K562 (cell line): ENCODE measurements at regions of chr16 and their contacts with region 1.

Region 1: GRCh38 chr16:83952940-83953795 is at the start of gene OSGIN1:
- DNase-seq: peak; percentile 96 to 98 (median 96)
- ATAC-seq: peak; percentile 91
- H3K4me3 ChIP-seq: peak within 1 kb of the TSS; percentile 64
- H3K27ac ChIP-seq: peak within 1 kb of the TSS; percentile 85
- H3K4me1 ChIP-seq: peaks cover 18 to 51% of the 10 kb centered on the region in 2 experiments
- H3K27me3 ChIP-seq: no peaks in the 10 kb centered on the region
- CTCF ChIP-seq: no peak
- EP300 ChIP-seq: peak; percentile 48
- POLR2A ChIP-seq: peak; percentile 93
- RAD21 ChIP-seq: no peak
- polyA plus RNA-seq, gene OSGIN1: 0.03 to 0.04 TPM

Region 2: GRCh38 chr16:83826146-83826913 is 126.8 kb before region 1 on chr16:
- CTCF ChIA-PET with region 1: no interaction called
- POLR2A ChIA-PET with region 1: no interaction called
- in situ Hi-C with region 1: no loop called
- intact Hi-C with region 1: loop called (anchors 5 kb)
- DNase-seq: peak; percentile 85 to 91 (median 89)
- ATAC-seq: peak; percentile 96
- H3K4me3 ChIP-seq: no peak overlapping the region
- H3K27ac ChIP-seq: no peak overlapping the region
- H3K4me1 ChIP-seq: peaks cover 0 to 7% of the 10 kb centered on the region in 2 experiments; a peak in 3 of 5 replicates
- H3K27me3 ChIP-seq: peaks cover 32 to 63% of the 10 kb centered on the region in 2 experiments
- CTCF ChIP-seq: peak; percentile 92 to 98 (median 95)
- EP300 ChIP-seq: no peak; the same call in 1 of the 2 replicates
- POLR2A ChIP-seq: no peak
- RAD21 ChIP-seq: peak; percentile 88 to 98

Region 3: DNA sequence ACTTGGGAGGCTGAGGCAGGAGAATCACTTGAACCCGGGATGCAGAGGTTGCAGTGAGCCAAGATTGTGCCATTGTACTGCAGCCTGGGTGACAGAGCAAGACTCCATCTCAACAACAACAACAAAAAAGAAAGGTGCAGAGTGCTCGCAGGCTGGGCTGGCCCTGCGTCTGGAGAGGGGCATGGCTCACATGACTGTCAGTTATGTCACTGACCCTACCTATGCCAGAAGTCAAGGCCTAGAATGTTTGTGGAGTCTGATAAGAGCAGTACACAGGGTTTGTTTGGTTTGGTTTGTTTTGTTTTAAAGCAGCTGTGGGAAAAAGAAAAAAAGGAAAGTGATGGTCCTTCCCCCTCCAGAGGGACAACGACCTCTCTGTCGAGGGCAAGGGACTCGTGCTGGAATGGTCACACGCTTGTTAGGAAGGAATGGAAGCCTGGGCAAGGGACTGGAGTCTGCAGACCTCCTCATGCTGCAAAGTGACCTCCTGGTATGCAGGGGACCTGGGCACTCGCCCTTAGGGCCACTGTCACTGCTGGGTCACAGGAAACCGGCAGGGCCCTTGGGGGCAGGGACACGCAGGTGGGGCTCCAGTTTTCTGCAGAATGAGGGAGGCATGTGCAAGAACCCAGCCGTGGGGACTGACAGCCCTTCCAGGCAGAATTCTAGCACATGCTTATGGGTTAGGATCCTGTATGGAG is 10.2 kb before region 1 on chr16:
- CTCF ChIA-PET with region 1: no interaction called
- POLR2A ChIA-PET with region 1: interaction called, 11 read pairs
- in situ Hi-C with region 1: no loop called
- intact Hi-C with region 1: no loop called
- DNase-seq: no peak
- ATAC-seq: no peak; the same call in 2 of the 3 replicates
- H3K4me3 ChIP-seq: no peak overlapping the region
- H3K27ac ChIP-seq: no peak overlapping the region
- H3K4me1 ChIP-seq: peaks cover 0 to 31% of the 10 kb centered on the region in 2 experiments; a peak in 2 of 5 replicates
- H3K27me3 ChIP-seq: peaks cover 22 to 33% of the 10 kb centered on the region in 2 experiments; a peak in 4 of 5 replicates
- CTCF ChIP-seq: no peak
- EP300 ChIP-seq: no peak
- POLR2A ChIP-seq: no peak
- RAD21 ChIP-seq: no peak

Region 4: DNA sequence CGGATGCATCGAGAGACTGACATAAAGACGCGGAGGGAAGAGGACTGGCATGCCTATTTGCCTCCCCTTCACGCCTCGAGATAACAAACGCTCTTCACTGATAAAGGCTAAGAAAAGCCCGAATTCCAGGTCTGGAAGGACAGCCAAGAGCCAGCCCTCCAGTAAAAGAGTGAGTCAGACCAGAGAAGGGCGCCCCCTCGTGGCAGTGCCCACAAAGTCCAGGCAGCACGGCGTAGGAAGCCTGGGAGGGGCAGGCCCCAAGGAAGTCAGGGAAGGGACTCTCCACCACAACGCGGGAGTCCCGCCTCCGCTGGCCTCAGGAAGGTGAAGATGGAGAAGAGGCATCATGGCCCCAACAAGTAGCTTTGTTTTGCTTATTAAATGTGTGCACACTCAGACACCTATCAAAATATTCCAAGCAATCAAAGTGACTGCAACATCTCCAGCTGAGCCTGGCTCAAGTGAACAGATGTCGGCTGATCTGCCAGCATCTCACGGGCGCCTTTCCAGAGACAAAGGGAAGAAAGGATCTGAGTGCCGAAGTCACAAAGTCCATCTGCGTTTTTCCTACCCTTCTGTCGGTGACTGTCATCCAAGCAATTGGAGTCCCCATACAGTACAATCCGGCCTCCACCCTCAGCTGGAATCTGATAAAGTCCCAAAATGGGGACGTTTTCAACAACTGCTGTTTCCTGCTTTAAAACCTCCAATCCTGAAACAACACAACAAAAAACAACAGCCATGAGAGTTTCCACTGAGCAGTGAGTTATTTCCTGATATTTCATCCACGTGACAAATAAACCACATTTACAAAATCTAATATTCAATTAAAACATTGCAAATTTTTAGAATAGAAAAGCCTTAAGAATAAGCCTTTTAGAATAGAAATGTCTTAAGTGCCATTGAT is 109.8 kb after region 1 on chr16:
- CTCF ChIA-PET with region 1: interaction called, 38 read pairs
- POLR2A ChIA-PET with region 1: interaction called, 4 read pairs
- in situ Hi-C with region 1: loop called (anchors 5 kb)
- intact Hi-C with region 1: loop called (anchors 1 kb)
- DNase-seq: peak; percentile 85 to 90 (median 86)
- ATAC-seq: peak; percentile 99
- H3K4me3 ChIP-seq: no peak overlapping the region
- H3K27ac ChIP-seq: no peak overlapping the region
- H3K4me1 ChIP-seq: peaks cover 0 to 6% of the 10 kb centered on the region in 2 experiments; a peak in 1 of 5 replicates
- H3K27me3 ChIP-seq: no peaks in the 10 kb centered on the region
- CTCF ChIP-seq: peak; percentile 85 to 99 (median 92)
- EP300 ChIP-seq: no peak
- POLR2A ChIP-seq: no peak
- RAD21 ChIP-seq: peak; percentile 64 to 84

Region 5: DNA sequence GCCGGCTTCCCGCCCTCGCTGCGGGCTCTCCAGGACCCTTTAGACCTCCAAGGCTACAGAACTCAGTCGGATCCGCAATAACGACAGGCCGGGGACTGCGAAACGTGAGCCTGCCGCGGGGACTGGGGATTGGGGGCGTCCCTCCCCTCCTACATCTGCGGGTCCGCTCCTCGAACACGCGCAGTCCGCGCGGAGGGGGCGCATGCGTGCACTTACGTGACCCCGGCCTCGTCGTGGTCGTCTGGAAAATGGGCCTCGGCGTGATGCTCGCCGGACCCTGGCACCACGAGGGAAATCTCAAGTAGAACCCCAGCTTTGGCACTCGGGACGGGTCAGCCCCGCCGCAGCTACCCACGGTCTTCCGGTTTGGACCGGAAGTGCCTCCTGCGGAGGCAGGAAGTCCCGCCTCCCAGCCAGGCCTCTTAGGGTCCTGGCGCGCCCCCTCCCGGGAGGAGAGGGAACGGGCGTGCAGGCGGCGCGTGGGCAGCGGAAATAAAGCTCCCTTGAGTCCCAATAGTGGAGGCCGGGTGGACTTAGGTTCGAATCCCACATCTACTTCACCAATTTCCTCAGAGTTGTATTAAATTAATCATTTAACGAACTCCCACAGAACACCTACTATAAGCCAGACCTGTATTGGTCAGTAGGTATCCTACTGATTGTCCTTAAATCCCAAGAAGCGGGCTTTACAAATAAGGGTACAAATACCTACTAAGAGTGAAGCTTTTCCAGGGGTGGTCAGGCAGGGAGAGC is 233.7 kb after region 1 on chr16 and contains the start of gene TAF1C:
- CTCF ChIA-PET with region 1: interaction called, 3 read pairs
- POLR2A ChIA-PET with region 1: no interaction called
- in situ Hi-C with region 1: loop called (anchors 10 kb)
- intact Hi-C with region 1: no loop called
- DNase-seq: peak; percentile 98 to 99 (median 99)
- ATAC-seq: peak; percentile 95
- H3K4me3 ChIP-seq: peak within 1 kb of the TSS; percentile 94
- H3K27ac ChIP-seq: peak within 1 kb of the TSS; percentile 78
- H3K4me1 ChIP-seq: peaks cover 5 to 34% of the 10 kb centered on the region in 2 experiments; a peak in 4 of 5 replicates
- H3K27me3 ChIP-seq: peaks cover 2 to 10% of the 10 kb centered on the region in 2 experiments; a peak in 1 of 5 replicates
- CTCF ChIP-seq: peak; percentile 98 to 99 (median 99)
- EP300 ChIP-seq: peak; percentile 62
- POLR2A ChIP-seq: peak; percentile 87
- RAD21 ChIP-seq: peak; percentile 80 to 89
- polyA plus RNA-seq, gene TAF1C: 1.5 TPM

Region 6: DNA sequence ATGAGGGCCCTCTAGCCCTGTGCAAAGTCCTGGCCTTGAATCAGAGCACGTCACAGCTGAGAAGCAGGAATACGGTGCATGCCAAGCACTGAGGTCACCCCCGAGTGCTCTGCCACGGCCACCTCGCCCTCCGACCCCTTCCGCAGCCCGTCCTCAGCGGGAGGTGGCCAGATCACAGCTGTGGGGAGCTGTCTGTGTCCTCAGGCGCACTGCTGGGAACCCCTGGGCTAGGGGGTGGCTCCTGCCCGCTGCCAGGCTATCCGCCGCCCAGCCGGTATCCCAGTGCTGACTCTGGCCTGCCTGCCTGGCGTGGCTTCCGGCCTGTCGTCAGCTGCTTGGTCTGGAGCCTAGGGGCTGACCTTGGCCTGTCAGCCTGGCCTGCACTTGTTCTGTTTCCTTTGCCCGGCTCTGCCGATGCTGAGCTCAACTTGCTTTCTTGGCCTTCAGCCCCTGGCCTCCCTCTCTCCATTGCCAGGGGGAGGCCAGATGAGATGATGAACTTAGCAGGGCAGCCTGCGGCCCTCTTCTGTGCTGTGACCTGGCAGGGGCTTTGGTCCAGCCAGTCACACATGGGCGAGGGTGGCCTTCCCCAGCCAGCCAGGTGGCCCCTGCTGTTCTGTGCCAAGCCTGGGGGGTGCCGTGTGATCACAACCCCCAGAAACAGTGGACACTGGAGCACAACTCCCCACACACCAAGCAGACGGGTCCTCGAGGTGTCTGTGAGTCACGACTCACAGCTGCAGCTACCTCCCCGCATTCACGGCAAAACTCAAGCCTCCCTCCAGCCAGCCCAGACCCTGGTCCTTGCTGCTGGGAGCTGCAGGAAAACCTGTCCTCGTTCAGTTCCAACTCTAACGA is 980.8 kb after region 1 on chr16:
- CTCF ChIA-PET with region 1: no interaction called
- POLR2A ChIA-PET with region 1: no interaction called
- in situ Hi-C with region 1: no loop called
- intact Hi-C with region 1: no loop called
- DNase-seq: peak in 1 of 4 experiments; percentile 9
- ATAC-seq: no peak
- H3K4me3 ChIP-seq: no peak overlapping the region
- H3K27ac ChIP-seq: no peak overlapping the region
- H3K4me1 ChIP-seq: peaks cover 3 to 28% of the 10 kb centered on the region in 2 experiments; a peak in 3 of 5 replicates
- H3K27me3 ChIP-seq: peaks cover 23 to 32% of the 10 kb centered on the region in 2 experiments; a peak in 4 of 5 replicates
- CTCF ChIP-seq: no peak
- EP300 ChIP-seq: no peak
- POLR2A ChIP-seq: no peak
- RAD21 ChIP-seq: no peak